GM12878 (cell line): ENCODE measurements at regions of chr15 and their contacts with region 1.

Region 1: GRCh38 chr15:77179541-77179998 is 108.7 kb upstream of the TSPAN3 start:
- DNase-seq: peak; percentile 74
- ATAC-seq: peak; percentile 74
- H3K4me3 ChIP-seq: no peak overlapping the region; the same call in 1 of the 2 replicates
- H3K27ac ChIP-seq: peak overlapping the region; percentile 90
- H3K4me1 ChIP-seq: peaks cover 47% of the 10 kb centered on the region
- H3K27me3 ChIP-seq: no peaks in the 10 kb centered on the region
- CTCF ChIP-seq: peak in 2 of 3 experiments; percentile 17 to 41; a peak in 2 of 6 replicates
- EP300 ChIP-seq: peak in 1 of 2 experiments; percentile 73; a peak in 1 of 4 replicates
- POLR2A ChIP-seq: no peak
- RAD21 ChIP-seq: peak; percentile 56

Region 2: GRCh38 chr15:76625267-76625666 is 554.3 kb before region 1 on chr15:
- CTCF ChIA-PET with region 1: no interaction called
- POLR2A ChIA-PET with region 1: no interaction called
- RAD21 ChIA-PET with region 1: no interaction called
- SMC1A ChIA-PET with region 1: no interaction called
- in situ Hi-C with region 1: no loop called
- intact Hi-C with region 1: no loop called
- DNase-seq: no peak
- ATAC-seq: peak; percentile 61
- H3K4me3 ChIP-seq: no peak overlapping the region
- H3K27ac ChIP-seq: no peak overlapping the region
- H3K4me1 ChIP-seq: no peaks in the 10 kb centered on the region
- H3K27me3 ChIP-seq: no peaks in the 10 kb centered on the region
- CTCF ChIP-seq: peak in 1 of 3 experiments; percentile 26; a peak in 3 of 6 replicates
- EP300 ChIP-seq: no peak
- POLR2A ChIP-seq: no peak
- RAD21 ChIP-seq: no peak

Region 3: GRCh38 chr15:77024271-77025082 is 155.1 kb before region 1 on chr15:
- CTCF ChIA-PET with region 1: interaction called, 4 read pairs
- POLR2A ChIA-PET with region 1: no interaction called
- RAD21 ChIA-PET with region 1: interaction called, 9 read pairs
- SMC1A ChIA-PET with region 1: interaction called, 11 read pairs
- in situ Hi-C with region 1: no loop called
- intact Hi-C with region 1: no loop called
- DNase-seq: no peak
- ATAC-seq: peak; percentile 66
- H3K4me3 ChIP-seq: no peak overlapping the region
- H3K27ac ChIP-seq: no peak overlapping the region
- H3K4me1 ChIP-seq: peaks cover 33% of the 10 kb centered on the region
- H3K27me3 ChIP-seq: no peaks in the 10 kb centered on the region
- CTCF ChIP-seq: peak; percentile 75 to 93 (median 83)
- EP300 ChIP-seq: no peak
- POLR2A ChIP-seq: no peak
- RAD21 ChIP-seq: peak; percentile 83

Region 4: GRCh38 chr15:77112838-77113504 is 66.6 kb before region 1 on chr15:
- CTCF ChIA-PET with region 1: interaction called, 361 read pairs
- POLR2A ChIA-PET with region 1: no interaction called
- RAD21 ChIA-PET with region 1: interaction called, 272 read pairs
- SMC1A ChIA-PET with region 1: interaction called, 365 read pairs
- in situ Hi-C with region 1: no loop called
- intact Hi-C with region 1: no loop called
- DNase-seq: no peak
- ATAC-seq: no peak
- H3K4me3 ChIP-seq: no peak overlapping the region
- H3K27ac ChIP-seq: no peak overlapping the region
- H3K4me1 ChIP-seq: no peaks in the 10 kb centered on the region
- H3K27me3 ChIP-seq: no peaks in the 10 kb centered on the region
- CTCF ChIP-seq: no peak
- EP300 ChIP-seq: no peak
- POLR2A ChIP-seq: no peak
- RAD21 ChIP-seq: no peak

Region 5: DNA sequence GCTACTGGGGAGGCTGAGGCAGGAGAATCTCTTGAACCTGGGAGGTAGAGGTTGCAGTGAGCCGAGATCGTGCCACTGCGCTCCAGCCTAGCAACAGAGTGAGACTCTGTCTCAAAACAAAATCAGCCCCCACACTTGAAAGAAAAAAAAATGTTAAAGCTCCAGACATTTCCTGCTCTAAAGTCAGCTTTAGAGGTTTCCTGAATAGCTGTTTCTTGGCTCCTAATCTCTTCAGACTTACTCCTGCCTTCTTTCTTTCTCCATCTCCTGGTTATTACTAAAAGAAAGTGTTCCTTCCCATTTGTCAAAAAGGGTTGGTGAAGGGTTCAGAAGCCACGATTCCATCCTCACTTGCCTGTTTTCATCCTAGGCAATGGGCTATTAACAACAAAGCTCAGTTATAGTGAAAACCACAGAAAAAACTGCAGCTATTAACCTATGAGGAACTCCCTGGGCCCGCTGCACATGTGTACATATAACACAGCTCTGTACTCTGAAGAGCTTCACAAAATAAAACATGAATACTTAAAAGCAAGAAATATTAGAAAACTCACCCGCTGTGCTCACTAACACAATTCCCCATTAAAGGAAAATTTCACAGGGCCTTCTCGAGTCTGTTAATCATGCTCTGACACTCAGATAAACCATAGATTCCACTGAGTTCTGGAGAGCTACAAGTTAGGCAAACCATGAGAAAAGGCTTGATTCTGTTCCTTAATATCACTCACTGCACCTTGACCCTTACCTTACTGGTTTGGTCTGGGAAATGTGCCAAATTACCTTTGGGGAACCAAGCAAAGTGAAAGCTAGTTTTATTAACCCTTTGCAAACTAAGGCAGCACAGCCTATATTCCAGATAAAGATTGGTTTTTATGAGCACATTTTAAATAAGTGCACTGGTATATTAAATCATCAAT is 18.8 kb before region 1 on chr15:
- CTCF ChIA-PET with region 1: interaction called, 25 read pairs
- POLR2A ChIA-PET with region 1: interaction called, 4 read pairs
- RAD21 ChIA-PET with region 1: interaction called, 26 read pairs
- SMC1A ChIA-PET with region 1: interaction called, 25 read pairs
- in situ Hi-C with region 1: no loop called
- intact Hi-C with region 1: no loop called
- DNase-seq: no peak
- ATAC-seq: peak; percentile 50
- H3K4me3 ChIP-seq: no peak overlapping the region
- H3K27ac ChIP-seq: no peak overlapping the region
- H3K4me1 ChIP-seq: no peaks in the 10 kb centered on the region
- H3K27me3 ChIP-seq: no peaks in the 10 kb centered on the region
- CTCF ChIP-seq: no peak
- EP300 ChIP-seq: no peak
- POLR2A ChIP-seq: no peak
- RAD21 ChIP-seq: no peak

Region 6: DNA sequence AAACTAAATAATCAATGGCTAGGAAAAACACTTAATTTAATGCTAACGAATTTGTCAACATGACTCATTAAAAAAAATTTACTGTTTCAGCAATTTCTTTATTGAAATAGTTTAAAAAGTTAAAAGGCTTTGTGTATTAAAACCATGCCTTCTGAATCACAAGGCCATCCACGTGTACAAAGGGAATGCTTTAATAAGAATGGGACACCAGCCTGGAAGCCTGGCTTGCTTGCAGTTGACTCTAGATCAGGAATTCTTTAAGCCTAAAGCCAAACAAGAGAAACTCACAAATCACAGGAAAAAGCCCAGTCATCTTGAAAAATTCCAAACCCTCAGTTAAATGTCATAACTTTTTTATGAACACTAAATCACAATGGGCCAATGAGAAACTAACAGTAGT is 102.8 kb after region 1 on chr15:
- CTCF ChIA-PET with region 1: no interaction called
- POLR2A ChIA-PET with region 1: no interaction called
- RAD21 ChIA-PET with region 1: no interaction called
- SMC1A ChIA-PET with region 1: no interaction called
- in situ Hi-C with region 1: no loop called
- intact Hi-C with region 1: no loop called
- DNase-seq: no peak
- ATAC-seq: no peak
- H3K4me3 ChIP-seq: no peak overlapping the region
- H3K27ac ChIP-seq: no peak overlapping the region
- H3K4me1 ChIP-seq: no peaks in the 10 kb centered on the region
- H3K27me3 ChIP-seq: no peaks in the 10 kb centered on the region
- CTCF ChIP-seq: no peak
- EP300 ChIP-seq: no peak
- POLR2A ChIP-seq: no peak
- RAD21 ChIP-seq: no peak

Region 7: DNA sequence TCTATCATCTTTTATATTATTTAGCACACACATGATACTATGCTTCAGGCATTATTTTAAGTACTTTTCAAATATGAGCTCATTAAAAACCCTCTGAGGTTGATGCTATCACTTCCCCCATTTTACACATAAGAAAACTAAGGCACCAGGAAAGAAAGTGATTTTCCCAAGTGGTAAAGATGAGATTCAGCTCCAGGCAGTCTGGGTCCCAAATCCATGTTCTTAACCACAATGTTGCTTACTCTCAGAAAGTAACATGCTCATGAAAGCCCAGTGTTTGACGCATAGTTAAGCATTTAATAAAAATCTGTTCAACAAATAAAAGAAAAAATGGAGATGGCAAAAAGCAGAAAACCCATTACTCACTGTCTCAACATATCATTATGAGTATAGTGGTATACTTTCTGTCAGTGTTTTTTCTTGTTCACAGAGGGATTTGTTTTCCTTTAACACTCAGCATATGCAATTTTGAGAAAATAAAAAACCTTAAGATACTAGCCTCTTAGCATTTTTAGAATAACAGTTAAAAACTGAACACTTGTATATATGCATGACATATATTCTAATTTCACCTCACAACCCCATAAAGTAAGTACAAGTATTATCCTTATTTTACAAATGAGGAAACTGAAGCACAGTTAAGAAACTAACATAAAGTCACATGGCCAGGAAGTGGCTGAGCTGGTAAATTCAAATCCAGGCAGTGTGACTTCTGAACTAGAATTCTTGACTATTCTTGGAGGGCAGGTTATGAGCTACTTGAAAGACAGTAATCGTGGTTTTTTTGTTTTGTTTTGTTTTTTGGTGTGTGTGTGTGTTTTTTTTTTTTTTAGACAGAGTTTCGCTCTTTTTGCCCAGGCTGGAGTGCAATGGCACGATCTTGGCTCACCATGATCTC is 229.9 kb after region 1 on chr15:
- CTCF ChIA-PET with region 1: interaction called, 25 read pairs
- POLR2A ChIA-PET with region 1: interaction called, 17 read pairs
- RAD21 ChIA-PET with region 1: interaction called, 116 read pairs
- SMC1A ChIA-PET with region 1: interaction called, 140 read pairs
- in situ Hi-C with region 1: no loop called
- intact Hi-C with region 1: no loop called
- DNase-seq: peak; percentile 51
- ATAC-seq: peak; percentile 83
- H3K4me3 ChIP-seq: no peak overlapping the region
- H3K27ac ChIP-seq: peak overlapping the region; percentile 27
- H3K4me1 ChIP-seq: peaks cover 10% of the 10 kb centered on the region; the same call in 1 of the 2 replicates
- H3K27me3 ChIP-seq: no peaks in the 10 kb centered on the region
- CTCF ChIP-seq: no peak
- EP300 ChIP-seq: peak in 1 of 2 experiments; percentile 22; a peak in 1 of 4 replicates
- POLR2A ChIP-seq: no peak
- RAD21 ChIP-seq: no peak

Region 8: GRCh38 chr15:77496710-77497103 is 317.1 kb after region 1 on chr15:
- CTCF ChIA-PET with region 1: interaction called, 411 read pairs
- POLR2A ChIA-PET with region 1: no interaction called
- RAD21 ChIA-PET with region 1: interaction called, 279 read pairs
- SMC1A ChIA-PET with region 1: interaction called, 269 read pairs
- in situ Hi-C with region 1: no loop called
- intact Hi-C with region 1: no loop called
- DNase-seq: no peak
- ATAC-seq: peak; percentile 92
- H3K4me3 ChIP-seq: no peak overlapping the region
- H3K27ac ChIP-seq: no peak overlapping the region
- H3K4me1 ChIP-seq: peaks cover 20% of the 10 kb centered on the region
- H3K27me3 ChIP-seq: no peaks in the 10 kb centered on the region
- CTCF ChIP-seq: peak; percentile 89 to 96 (median 96)
- EP300 ChIP-seq: no peak
- POLR2A ChIP-seq: no peak
- RAD21 ChIP-seq: peak; percentile 95